Sciatic nerve (tissue), 2 donors: ENCODE measurements at regions of chr6 and their contacts with region 1.

Region 1: DNA sequence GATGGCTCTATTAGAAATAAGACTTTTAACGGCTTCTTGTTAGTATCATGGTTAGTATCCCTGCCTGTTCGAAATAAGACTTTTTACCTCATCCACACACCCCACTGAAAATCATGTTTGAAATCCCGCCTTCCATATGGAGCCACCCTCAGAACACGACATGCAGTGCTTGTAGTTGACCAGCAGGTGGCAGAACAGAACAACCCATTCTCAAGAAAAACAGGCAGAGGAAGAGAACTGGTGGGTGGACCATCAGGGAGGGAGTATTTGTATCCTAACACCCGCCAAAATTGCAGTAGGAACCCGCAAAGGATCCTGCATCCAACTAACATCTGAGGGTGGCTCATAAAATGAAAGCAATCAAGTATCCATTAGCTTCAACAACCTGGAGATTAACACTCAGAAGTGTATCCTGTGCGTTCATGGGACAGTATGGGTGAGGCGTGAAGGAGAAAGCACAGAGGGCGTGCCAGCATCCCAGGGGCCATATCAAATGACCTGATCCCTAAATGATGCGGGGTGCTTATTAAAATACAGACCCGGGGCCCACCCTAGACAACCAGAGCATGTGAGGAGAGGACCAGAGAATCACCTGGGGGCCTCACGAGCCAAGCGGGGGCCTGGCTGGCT is 89.6 kb upstream of the NHSL1 start:
- DNase-seq: peak; percentile 78
- ATAC-seq: peak; percentile 72

Region 2: DNA sequence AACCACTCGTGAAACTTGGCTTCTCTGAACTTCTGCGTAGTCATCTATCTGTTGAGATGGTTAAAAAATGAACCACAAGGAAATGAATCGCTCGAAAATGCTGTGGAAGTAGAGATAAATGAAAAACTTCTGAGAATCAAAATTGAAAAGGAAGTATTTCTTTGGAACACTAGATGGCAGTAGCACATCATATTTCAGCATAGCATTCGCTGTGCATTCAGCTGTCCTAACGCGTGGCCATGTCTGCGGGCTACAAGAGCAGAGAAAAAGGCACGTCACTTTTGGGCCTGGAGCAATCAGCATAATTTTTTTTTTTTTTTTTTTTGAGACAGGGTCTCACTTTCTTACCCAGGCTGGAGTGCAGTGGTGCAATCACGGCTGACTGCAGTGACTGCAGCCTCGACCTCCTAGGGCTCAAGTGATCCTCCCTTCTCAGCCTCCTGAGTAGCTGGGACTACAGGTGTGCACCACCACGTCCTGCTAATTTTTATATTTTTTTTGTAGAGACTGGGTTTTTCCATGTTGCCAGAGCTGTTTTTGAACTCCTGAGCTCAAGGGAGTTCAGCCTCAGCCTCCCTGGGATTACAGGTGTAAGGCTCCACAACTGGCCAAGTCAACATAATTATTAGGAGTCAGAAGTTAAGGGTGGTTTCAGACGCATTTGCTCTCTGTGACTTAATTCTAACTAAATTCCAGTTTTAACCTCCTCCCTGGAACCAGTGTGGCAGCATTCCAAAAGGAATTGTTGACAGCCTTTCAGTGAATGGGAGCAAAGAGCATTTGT is 472.9 kb before region 1 on chr6:
- intact Hi-C with region 1: loop called (anchors 2 kb)
- DNase-seq: peak; percentile 64
- ATAC-seq: peak; percentile 89

Region 3: GRCh38 chr6:138431256-138432062 is 157.5 kb before region 1 on chr6:
- intact Hi-C with region 1: loop called (anchors 5 kb)
- DNase-seq: no peak
- ATAC-seq: no peak

Region 4: GRCh38 chr6:138765896-138766655 is 177.2 kb after region 1 on chr6:
- intact Hi-C with region 1: loop called (anchors 5 kb)
- DNase-seq: no peak
- ATAC-seq: no peak